ENCODE measurements at regions of chr15 and their contacts with region 1.

Region 1: DNA sequence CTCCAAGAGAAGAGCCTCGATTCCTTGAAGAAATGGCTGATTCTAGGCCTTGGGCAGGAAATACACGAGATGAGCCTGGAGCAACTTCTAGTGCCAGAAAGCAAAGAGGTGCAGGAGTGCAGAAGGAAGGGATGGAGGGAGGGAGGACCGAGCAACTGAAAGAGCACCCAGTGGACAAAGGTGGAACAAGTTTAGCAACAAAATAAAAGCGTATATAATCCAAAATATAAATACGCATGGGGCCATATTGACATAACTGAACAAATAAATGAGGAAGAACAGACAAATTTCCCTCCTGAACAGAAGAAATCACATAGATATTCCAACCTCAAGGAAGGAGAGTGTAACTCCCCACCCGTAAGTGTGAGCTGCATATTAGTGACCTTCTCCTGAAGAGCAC is 34.4 kb downstream of the CHSY1 start:
- DNase-seq: no peak
- H3K4me3 ChIP-seq: no peak overlapping the region
- H3K27ac ChIP-seq: no peak overlapping the region
- H3K4me1 ChIP-seq: peaks cover 0 to 5% of the 10 kb centered on the region in 2 donors
- H3K27me3 ChIP-seq: no peaks in the 10 kb centered on the region
- CTCF ChIP-seq: no peak
- POLR2A ChIP-seq: no peak

Region 2: GRCh38 chr15:101115393-101115785 is 102.1 kb before region 1 on chr15:
- intact Hi-C with region 1: no loop called
- DNase-seq: no peak
- H3K4me3 ChIP-seq: peak overlapping the region in 1 of 3 donors; percentile 37
- H3K27ac ChIP-seq: peak overlapping the region; percentile 72 to 86
- H3K4me1 ChIP-seq: peaks cover 6 to 8% of the 10 kb centered on the region in 2 donors
- H3K27me3 ChIP-seq: no peaks in the 10 kb centered on the region
- CTCF ChIP-seq: no peak
- POLR2A ChIP-seq: no peak

Region 3: GRCh38 chr15:101188637-101189408 is 28.7 kb before region 1 on chr15:
- intact Hi-C with region 1: loop called (anchors 1 kb)
- DNase-seq: no peak
- H3K4me3 ChIP-seq: peak overlapping the region in 2 of 3 donors; percentile 13 to 48
- H3K27ac ChIP-seq: peak overlapping the region; percentile 36 to 81
- H3K4me1 ChIP-seq: peaks cover 8 to 25% of the 10 kb centered on the region in 2 donors
- H3K27me3 ChIP-seq: no peaks in the 10 kb centered on the region
- CTCF ChIP-seq: no peak
- POLR2A ChIP-seq: no peak

Region 4: GRCh38 chr15:101689901-101690300 is 472.4 kb after region 1 on chr15:
- intact Hi-C with region 1: loop called (anchors 5 kb)
- DNase-seq: no peak
- H3K4me3 ChIP-seq: no peak overlapping the region
- H3K27ac ChIP-seq: no peak overlapping the region
- H3K4me1 ChIP-seq: no peaks in the 10 kb centered on the region
- H3K27me3 ChIP-seq: no peaks in the 10 kb centered on the region
- CTCF ChIP-seq: no peak
- POLR2A ChIP-seq: no peak

Measured in breast epithelium (tissue), 4 donors.